Endothelial cell of umbilical vein (primary cell): ENCODE measurements at regions of chr2 and their contacts with region 1.

Region 1: DNA sequence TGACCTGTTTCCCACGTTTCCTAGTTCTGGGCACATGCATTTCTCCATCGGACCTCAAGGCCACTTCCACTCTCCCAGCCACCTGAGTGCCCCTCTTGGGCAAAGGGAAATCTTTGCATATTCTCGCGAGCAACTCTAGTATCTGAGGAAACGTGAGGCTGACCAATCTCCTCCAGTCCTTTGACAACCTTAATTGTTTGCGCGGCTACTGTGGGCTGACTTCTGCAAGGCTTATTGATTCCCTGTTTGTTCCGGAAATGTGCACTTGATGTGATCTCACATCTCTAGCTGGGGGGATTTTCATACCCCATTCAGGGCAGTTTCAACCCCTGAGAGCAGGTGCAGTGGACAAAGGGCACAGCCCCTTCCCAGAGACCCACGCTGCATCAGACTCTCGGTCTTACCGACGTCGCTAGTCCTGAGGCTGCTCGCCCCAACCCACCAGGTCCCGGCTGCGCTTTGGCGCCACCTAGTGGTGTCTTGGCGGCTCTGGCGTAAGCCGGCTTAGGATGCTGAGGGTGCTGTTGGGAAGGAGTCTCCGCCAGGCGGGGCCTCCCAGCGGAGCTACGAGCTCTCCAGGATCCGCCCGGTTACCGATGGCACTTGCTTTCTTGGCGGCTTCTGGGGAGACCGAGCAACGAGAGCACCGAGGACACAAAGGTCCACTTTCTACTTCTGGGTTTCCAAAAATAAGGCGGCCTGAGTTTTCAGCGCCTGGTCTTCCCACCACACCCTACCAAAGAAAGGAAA is 24.8 kb upstream of the SPR start:
- DNase-seq: peak; percentile 92
- H3K4me3 ChIP-seq: no peak overlapping the region
- H3K27ac ChIP-seq: no peak overlapping the region
- H3K4me1 ChIP-seq: peaks cover 6% of the 10 kb centered on the region
- H3K27me3 ChIP-seq: peaks cover 8 to 26% of the 10 kb centered on the region in 2 experiments
- CTCF ChIP-seq: peak; percentile 98 to 100
- POLR2A ChIP-seq: no peak

Region 2: GRCh38 chr2:72095364-72095763 is 767.0 kb before region 1 on chr2:
- CTCF ChIA-PET with region 1: no interaction called
- POLR2A ChIA-PET with region 1: no interaction called
- dilution Hi-C with region 1: no loop called
- intact Hi-C with region 1: no loop called
- DNase-seq: no peak
- H3K4me3 ChIP-seq: no peak overlapping the region
- H3K27ac ChIP-seq: no peak overlapping the region
- H3K4me1 ChIP-seq: no peaks in the 10 kb centered on the region
- H3K27me3 ChIP-seq: peaks cover 4 to 17% of the 10 kb centered on the region in 2 experiments
- CTCF ChIP-seq: no peak
- POLR2A ChIP-seq: no peak

Region 3: DNA sequence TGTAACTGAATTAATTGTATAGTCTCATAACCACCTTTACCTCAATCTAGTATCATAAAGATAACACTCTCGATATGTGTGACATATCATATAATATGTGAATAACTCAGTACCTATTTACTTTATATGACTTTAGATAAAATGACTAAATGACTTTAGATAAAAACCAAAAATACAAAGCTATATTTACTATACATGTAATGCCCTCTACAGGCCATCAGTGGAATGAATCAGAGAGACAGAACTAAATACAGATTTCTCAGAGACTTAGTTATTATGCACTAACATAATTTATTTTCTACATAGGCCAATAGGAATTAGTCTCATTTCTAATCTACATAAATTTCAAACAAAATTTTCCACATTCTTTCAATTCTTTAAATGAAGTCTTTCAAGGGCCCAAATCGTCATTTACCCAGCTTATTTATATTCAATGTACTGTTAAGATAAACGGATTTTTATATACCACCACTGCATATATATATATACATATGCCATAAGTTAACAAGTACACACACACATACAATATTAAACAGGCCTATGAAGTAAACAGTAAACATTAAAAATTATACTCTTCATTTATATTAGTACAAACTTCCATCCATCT is 256.5 kb before region 1 on chr2:
- CTCF ChIA-PET with region 1: interaction called, 3 read pairs
- POLR2A ChIA-PET with region 1: no interaction called
- dilution Hi-C with region 1: no loop called
- intact Hi-C with region 1: loop called (anchors 10 kb)
- DNase-seq: peak; percentile 43
- H3K4me3 ChIP-seq: no peak overlapping the region
- H3K27ac ChIP-seq: no peak overlapping the region
- H3K4me1 ChIP-seq: no peaks in the 10 kb centered on the region
- H3K27me3 ChIP-seq: no peaks in the 10 kb centered on the region
- CTCF ChIP-seq: peak; percentile 38 to 43
- POLR2A ChIP-seq: no peak

Region 4: GRCh38 chr2:72770879-72771461 is 91.4 kb before region 1 on chr2:
- CTCF ChIA-PET with region 1: interaction called, 118 read pairs
- POLR2A ChIA-PET with region 1: no interaction called
- dilution Hi-C with region 1: no loop called
- intact Hi-C with region 1: loop called (anchors 1 kb)
- DNase-seq: peak; percentile 84
- H3K4me3 ChIP-seq: no peak overlapping the region
- H3K27ac ChIP-seq: no peak overlapping the region
- H3K4me1 ChIP-seq: no peaks in the 10 kb centered on the region
- H3K27me3 ChIP-seq: no peaks in the 10 kb centered on the region
- CTCF ChIP-seq: peak; percentile 54 to 71
- POLR2A ChIP-seq: no peak

Region 5: DNA sequence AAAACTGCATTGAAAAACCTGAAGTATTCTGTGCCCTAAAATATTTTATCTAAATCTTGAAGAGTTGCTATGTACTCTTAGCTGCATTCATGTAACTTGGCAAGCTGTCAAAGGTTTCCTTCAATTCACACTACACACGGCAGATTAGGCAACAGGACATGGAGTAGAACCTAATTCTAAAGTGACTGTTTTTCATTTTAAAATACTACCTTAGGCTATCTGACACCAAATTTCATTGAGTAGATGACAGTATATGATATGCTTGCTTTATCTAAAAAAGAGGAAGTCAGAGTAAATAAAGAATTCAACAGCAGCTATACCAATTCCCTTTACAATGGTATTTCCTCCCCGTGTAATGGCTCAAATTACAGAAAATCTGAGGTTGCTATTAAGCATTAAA is 81.9 kb before region 1 on chr2:
- CTCF ChIA-PET with region 1: interaction called, 16 read pairs
- POLR2A ChIA-PET with region 1: no interaction called
- dilution Hi-C with region 1: no loop called
- intact Hi-C with region 1: no loop called
- DNase-seq: peak; percentile 84
- H3K4me3 ChIP-seq: no peak overlapping the region
- H3K27ac ChIP-seq: peak overlapping the region; percentile 5
- H3K4me1 ChIP-seq: peaks cover 38% of the 10 kb centered on the region
- H3K27me3 ChIP-seq: no peaks in the 10 kb centered on the region
- CTCF ChIP-seq: no peak
- POLR2A ChIP-seq: no peak

Region 6: GRCh38 chr2:72813841-72814240 is 48.6 kb before region 1 on chr2:
- CTCF ChIA-PET with region 1: interaction called, 9 read pairs
- POLR2A ChIA-PET with region 1: no interaction called
- dilution Hi-C with region 1: no loop called
- intact Hi-C with region 1: loop called (anchors 5 kb)
- DNase-seq: peak; percentile 50
- H3K4me3 ChIP-seq: no peak overlapping the region
- H3K27ac ChIP-seq: peak overlapping the region; percentile 12
- H3K4me1 ChIP-seq: peaks cover 7% of the 10 kb centered on the region
- H3K27me3 ChIP-seq: no peaks in the 10 kb centered on the region
- CTCF ChIP-seq: no peak
- POLR2A ChIP-seq: no peak

Region 7: GRCh38 chr2:72825241-72826155 is 36.9 kb before region 1 on chr2 and contains the start of gene EXOC6B:
- CTCF ChIA-PET with region 1: interaction called, 3 read pairs
- POLR2A ChIA-PET with region 1: no interaction called
- dilution Hi-C with region 1: no loop called
- intact Hi-C with region 1: loop called (anchors 1 kb)
- DNase-seq: peak; percentile 95
- H3K4me3 ChIP-seq: peak within 1 kb of the TSS; percentile 40 to 97 (median 75)
- H3K27ac ChIP-seq: peak within 1 kb of the TSS; percentile 58
- H3K4me1 ChIP-seq: peaks cover 16% of the 10 kb centered on the region
- H3K27me3 ChIP-seq: no peaks in the 10 kb centered on the region
- CTCF ChIP-seq: no peak
- POLR2A ChIP-seq: peak; percentile 80
- total RNA-seq, gene EXOC6B: 23.6 and 34.8 TPM in 2 replicates